ENCODE measurements at regions of chr16 and their contacts with region 1.

Region 1: GRCh38 chr16:84726079-84726668 is 26.4 kb downstream of the USP10 start:
- DNase-seq: peak; percentile 97
- H3K4me3 ChIP-seq: peak overlapping the region; percentile 0 to 19 (median 6)
- H3K27ac ChIP-seq: peak overlapping the region; percentile 38 to 66 (median 57)
- H3K4me1 ChIP-seq: peaks cover 47 to 73% (median 64%) of the 10 kb centered on the region in 4 donors
- H3K27me3 ChIP-seq: no peaks in the 10 kb centered on the region
- CTCF ChIP-seq: peak; percentile 89 to 94 (median 92)
- EP300 ChIP-seq: no peak
- POLR2A ChIP-seq: no peak

Region 2: DNA sequence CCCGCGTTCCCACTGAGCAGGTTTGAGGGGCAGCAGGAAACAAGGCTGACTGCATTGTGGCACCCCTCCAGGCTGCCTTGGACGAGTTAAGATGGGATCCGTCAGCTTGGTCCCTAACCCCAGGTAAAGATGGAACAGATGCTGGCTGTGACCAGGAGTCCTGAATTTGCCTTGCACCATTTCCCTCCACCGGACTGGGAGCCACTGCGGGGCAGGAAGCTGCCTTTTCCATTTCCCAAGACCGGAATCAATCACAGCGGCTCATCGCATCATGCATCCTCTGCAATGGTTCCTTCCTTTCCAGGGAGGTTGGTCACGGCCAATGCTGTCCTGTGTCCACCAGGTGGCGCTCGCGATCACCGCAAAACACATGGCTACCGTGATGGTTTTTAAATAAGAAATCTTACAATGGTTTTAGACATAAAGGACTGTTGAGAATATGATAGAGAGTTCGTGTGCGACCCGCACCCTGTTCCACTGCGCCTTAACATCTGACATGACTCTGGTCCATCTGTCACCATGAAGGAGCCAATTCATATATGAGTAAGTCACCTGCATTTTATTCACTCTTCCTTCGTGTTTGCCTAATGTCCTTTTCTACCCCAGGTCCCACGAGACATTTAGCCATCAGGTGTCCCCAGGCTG is 214.9 kb before region 1 on chr16:
- intact Hi-C with region 1: loop called (anchors 5 kb)
- DNase-seq: peak; percentile 96
- H3K4me3 ChIP-seq: peak overlapping the region in 2 of 4 donors; percentile 5 to 23
- H3K27ac ChIP-seq: no peak overlapping the region
- H3K4me1 ChIP-seq: peaks cover 0 to 15% (median 11%) of the 10 kb centered on the region in 4 donors
- H3K27me3 ChIP-seq: no peaks in the 10 kb centered on the region
- CTCF ChIP-seq: peak; percentile 96 to 97 (median 97)
- EP300 ChIP-seq: no peak
- POLR2A ChIP-seq: no peak

Region 3: DNA sequence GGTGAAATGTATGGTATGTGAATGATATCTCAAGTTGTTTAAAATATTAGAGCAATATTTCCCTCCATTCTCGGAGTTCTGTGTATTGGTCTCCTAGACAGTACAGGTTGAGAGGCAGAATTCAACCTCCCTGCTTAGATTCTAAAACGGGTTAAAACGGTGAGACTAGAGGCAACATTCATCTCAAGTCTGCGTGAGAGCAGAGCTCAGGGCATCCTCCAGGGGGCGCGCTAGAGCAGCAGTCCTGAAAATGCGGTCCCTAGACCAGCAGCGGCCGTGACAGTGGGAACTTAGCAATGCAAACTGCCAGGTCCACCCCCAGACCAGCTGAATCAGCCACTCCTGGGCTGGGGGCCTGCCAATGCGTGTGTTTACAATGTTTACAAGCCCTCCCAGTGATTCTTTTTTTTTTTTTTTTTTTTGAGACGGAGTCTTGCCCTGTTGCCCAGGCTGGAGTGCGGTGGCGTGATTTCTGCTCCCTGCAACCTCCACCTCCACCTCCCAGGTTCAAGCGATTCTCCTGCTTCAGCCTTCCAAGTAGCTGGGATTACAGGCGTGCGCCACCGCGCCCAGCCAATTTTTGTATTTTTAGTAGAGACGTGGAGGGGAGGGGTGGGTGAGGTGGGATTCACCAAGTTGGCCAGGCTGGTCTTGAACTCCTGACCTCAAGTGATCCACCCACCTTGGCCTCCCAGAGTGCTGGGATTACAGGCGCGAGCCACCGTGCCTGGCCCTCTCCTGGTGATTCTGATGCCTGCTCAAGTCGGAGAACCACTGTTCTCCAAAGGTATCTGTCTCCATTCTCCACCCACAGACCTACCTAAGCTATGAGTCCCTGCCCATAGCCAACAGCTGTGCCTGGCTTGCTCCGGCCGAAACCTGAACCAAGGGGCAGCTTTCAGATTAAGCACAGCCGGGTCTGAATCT is 53.6 kb before region 1 on chr16:
- intact Hi-C with region 1: loop called (anchors 1 kb)
- DNase-seq: no peak
- H3K4me3 ChIP-seq: no peak overlapping the region
- H3K27ac ChIP-seq: no peak overlapping the region
- H3K4me1 ChIP-seq: peaks cover 0 to 10% (median 7%) of the 10 kb centered on the region in 4 donors
- H3K27me3 ChIP-seq: no peaks in the 10 kb centered on the region
- CTCF ChIP-seq: peak; percentile 87 to 94 (median 92)
- EP300 ChIP-seq: no peak
- POLR2A ChIP-seq: no peak